ENCODE measurements at regions of chr10 and their contacts with region 1.

Region 1: DNA sequence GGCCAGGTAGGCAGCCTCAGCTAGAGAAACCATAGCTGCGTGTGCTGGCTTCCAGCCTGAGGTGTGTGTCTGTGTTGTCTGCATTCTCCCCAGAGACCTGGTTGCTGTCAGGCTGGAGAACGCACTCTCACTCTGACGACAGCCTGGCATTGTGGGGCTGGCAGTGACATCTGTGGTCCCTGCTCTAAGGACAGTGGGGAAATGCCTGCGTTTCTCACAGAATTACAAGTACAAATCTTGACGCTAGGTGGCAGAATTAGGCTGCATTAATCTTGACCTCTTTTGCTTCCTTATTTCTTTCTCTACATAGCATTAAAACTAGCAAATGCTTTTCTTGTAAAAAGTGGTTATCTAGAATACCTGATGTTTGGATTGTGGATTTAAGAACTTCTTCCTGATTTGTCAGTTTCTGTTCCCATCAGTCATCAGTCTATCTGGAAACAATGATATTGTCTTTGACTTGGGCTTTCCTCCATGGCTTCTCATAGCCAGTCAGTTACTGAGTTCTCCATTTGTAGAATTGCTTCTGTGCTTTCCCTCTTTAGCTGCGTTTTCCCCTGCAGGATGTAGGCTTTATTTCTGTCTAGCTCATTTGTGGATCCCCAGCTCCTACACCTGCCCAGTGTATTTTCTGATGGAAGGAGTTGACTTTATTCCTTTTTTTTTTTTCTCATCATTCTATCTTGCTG is 86.0 kb downstream of the FANK1 start:
- DNase-seq: peak; percentile 8 to 29
- H3K4me3 ChIP-seq: no peak overlapping the region
- H3K27ac ChIP-seq: no peak overlapping the region
- H3K4me1 ChIP-seq: no peaks in the 10 kb centered on the region
- H3K27me3 ChIP-seq: no peaks in the 10 kb centered on the region
- CTCF ChIP-seq: peak; percentile 34 to 84 (median 58)
- POLR2A ChIP-seq: no peak

Region 2: DNA sequence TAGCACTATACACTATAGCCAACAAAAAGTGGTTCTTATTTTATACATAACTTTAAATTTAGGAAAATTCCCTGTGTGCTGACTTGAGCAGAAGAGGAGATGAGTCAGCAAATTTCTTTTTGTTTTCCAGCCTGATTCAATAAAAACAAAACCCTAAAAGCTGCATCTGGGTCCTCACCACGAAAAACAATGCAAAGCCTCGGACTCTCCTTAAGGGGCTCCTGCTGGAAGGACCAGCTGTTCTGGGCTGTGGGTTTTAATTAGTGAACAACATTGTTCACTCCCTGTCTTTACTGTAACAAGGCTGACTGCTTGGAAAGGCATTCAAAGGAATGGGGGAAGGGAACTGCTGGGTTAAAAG is 165.8 kb after region 1 on chr10:
- intact Hi-C with region 1: no loop called
- DNase-seq: no peak
- H3K4me3 ChIP-seq: no peak overlapping the region
- H3K27ac ChIP-seq: no peak overlapping the region
- H3K4me1 ChIP-seq: peaks cover 6 to 7% of the 10 kb centered on the region in 2 donors
- H3K27me3 ChIP-seq: no peaks in the 10 kb centered on the region
- CTCF ChIP-seq: no peak
- POLR2A ChIP-seq: no peak

Region 3: DNA sequence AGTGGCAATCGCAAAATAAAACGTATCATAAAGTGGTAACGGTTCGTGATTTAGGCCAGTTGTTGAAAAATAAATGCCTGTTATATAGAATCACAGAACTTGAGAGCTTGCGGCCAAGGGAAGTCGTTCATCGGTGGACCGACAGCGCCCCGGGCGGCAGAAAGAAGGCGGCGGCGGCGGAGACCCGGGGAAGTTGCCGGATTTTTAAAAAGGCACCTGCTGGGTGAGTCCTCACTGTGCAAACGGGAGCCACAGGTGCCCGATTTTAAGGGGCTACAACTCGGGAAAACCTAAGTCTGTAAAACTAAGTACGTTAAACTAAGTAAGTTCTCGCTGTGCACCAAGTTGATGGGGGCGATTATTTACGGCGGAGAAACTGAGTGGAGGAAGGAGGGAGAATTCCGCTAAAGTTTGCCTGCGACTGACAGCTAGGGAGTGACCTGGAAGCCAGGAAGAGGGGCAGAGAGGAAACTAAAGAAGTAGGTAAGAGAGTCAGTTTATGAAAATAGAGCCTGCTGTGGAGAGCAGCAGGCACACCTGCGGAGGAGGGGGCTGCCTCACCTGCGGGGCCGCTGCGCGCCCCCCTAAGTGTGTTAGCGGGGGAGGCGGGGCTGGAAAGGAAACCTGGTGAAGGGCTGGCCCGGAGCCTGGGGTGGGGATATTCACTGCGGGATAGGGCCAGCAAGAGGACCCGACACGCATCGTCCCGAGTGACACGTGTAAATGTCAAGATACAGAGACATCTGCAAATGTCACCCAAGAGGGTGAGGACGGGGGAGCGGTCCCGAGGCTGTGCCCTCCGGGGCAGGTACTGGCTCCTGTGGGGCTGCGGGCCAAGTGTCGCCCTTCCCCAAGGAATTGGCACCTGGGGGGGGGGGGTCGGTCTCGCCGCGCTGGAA is 404.9 kb after region 1 on chr10:
- intact Hi-C with region 1: loop called (anchors 5 kb)
- DNase-seq: peak; percentile 65 to 76
- H3K4me3 ChIP-seq: peak overlapping the region in 1 of 3 donors; percentile 40
- H3K27ac ChIP-seq: no peak overlapping the region
- H3K4me1 ChIP-seq: peaks cover 6 to 16% of the 10 kb centered on the region in 2 donors
- H3K27me3 ChIP-seq: no peaks in the 10 kb centered on the region
- CTCF ChIP-seq: peak; percentile 39 to 87 (median 66)
- POLR2A ChIP-seq: no peak

Region 4: GRCh38 chr10:126504063-126504739 is 521.8 kb after region 1 on chr10:
- intact Hi-C with region 1: loop called (anchors 5 kb)
- DNase-seq: peak; percentile 25 to 26
- H3K4me3 ChIP-seq: no peak overlapping the region
- H3K27ac ChIP-seq: no peak overlapping the region
- H3K4me1 ChIP-seq: no peaks in the 10 kb centered on the region
- H3K27me3 ChIP-seq: no peaks in the 10 kb centered on the region
- CTCF ChIP-seq: peak; percentile 51 to 78 (median 70)
- POLR2A ChIP-seq: no peak

Measured in thyroid gland (tissue), 4 donors.